HepG2 (cell line): ENCODE measurements at regions of chr20 and their contacts with region 1.

Region 1: DNA sequence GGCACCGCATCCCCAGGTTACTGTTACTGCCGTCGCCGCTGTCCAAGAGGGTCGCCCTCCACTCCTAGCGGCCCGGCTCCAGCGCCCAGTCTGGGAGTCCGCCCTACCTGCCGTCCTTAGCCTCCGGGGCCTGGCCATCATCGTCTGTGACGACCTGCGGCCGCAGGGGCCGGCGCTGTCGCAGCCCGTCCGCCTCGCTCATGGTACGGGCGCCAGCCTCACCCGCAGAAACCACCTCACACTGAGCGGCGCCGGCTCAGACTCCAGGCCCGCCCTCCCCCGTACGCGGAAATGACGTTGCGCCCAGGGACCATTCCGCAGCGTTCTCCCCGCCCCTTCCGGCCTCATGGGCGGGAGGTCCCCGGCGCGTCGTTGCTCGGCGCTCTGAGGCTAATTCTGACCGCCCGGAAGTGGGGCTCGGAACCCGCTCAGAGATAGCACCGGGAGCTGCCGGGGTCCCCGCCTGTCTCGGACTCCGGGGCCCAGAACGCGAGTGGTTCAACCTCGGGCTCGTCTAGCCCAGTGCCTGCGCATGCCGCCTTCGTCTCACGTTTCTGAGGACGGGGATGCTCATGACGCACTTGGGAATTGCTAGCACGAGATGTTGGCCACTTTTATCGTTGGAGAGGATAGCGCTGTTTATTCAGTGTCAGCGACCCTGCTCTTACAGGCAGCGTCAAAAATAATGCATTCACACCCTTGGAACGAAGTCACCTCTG is at the start of gene APMAP:
- DNase-seq: peak; percentile 94
- ATAC-seq: peak; percentile 94
- H3K4me3 ChIP-seq: peak within 1 kb of the TSS; percentile 75 to 88 (median 85)
- H3K27ac ChIP-seq: peak within 1 kb of the TSS; percentile 67
- H3K4me1 ChIP-seq: peaks cover 68% of the 10 kb centered on the region
- H3K27me3 ChIP-seq: peaks cover 1 to 7% of the 10 kb centered on the region in 2 experiments; a peak in 1 of 5 replicates
- CTCF ChIP-seq: peak; percentile 24
- EP300 ChIP-seq: peak; percentile 23 to 48; a peak in 1 of 4 replicates
- POLR2A ChIP-seq: peak; percentile 93 to 97
- RAD21 ChIP-seq: peak; percentile 27; the same call in 1 of the 2 replicates
- total RNA-seq, gene APMAP: 96.9 and 214 TPM in 2 replicates

Region 2: DNA sequence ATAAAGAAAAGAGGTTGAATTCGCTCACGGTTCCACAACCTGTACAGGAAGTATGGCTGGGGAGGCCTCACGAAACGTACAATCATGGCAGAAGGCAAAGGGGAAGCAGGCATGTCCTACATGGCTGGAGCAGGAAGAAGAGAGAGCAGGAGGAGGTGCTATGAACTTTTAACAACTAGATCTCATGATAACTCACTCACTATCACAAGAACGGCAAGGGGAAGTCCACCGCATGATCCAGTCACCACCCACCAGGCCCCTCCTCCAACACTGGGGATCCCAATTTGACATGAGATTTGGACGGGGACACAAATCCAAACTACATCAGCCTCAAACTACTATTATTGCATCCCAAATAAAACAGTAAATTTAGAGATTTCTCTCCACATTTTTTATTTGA is 97.2 kb before region 1 on chr20:
- CTCF ChIA-PET with region 1: no interaction called
- POLR2A ChIA-PET with region 1: no interaction called
- in situ Hi-C with region 1: no loop called
- intact Hi-C with region 1: no loop called
- DNase-seq: no peak
- ATAC-seq: no peak
- H3K4me3 ChIP-seq: no peak overlapping the region
- H3K27ac ChIP-seq: no peak overlapping the region
- H3K4me1 ChIP-seq: no peaks in the 10 kb centered on the region
- H3K27me3 ChIP-seq: peaks cover 3 to 29% of the 10 kb centered on the region in 2 experiments; a peak in 2 of 5 replicates
- CTCF ChIP-seq: no peak
- EP300 ChIP-seq: no peak
- POLR2A ChIP-seq: no peak
- RAD21 ChIP-seq: no peak

Region 3: DNA sequence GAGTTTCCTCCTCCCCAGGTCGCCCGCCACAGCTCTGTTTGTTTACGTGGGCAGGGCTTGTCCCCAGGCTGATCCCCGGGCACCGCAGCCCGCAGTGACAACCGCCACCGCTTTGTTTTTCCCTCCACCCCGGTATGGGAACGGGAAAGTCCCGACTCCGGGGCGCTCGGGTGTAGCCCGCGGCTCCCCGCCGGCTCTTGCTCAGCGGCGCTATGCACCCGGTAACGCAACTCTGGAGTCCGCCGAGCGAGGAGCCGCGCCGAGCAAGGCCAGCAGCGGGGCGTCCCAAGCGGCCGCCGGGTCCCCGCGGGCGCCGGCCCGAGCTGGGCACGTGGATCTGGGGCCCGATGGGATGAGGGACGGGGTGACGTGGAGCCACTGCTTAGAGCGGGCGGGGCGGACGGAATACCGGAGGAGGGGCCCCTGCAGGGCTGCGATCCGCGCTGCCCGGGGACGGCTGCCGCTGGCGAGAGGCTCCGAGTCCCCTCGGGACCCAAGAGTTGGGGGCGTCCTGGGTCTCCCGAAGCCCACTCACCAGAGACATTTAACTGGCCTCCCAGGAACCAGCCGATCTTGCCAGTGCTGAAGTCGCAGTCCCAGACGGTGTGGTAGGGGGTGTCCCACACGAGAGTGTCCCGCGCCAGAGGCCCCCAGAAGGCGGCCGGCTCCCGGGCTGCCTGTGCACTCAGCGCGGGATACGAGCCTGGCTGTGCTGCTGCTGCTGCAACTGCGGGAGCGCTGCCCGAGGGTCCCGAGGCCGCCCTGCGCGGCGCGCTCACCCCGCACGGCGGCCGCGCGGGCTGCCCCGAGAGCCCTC is 64.8 kb after region 1 on chr20:
- CTCF ChIA-PET with region 1: interaction called, 138 read pairs
- POLR2A ChIA-PET with region 1: interaction called, 4 read pairs
- in situ Hi-C with region 1: loop called (anchors 5 kb)
- intact Hi-C with region 1: no loop called
- DNase-seq: no peak
- ATAC-seq: peak; percentile 66
- H3K4me3 ChIP-seq: peak overlapping the region; percentile 64 to 82 (median 67)
- H3K27ac ChIP-seq: peak overlapping the region; percentile 6
- H3K4me1 ChIP-seq: peaks cover 92% of the 10 kb centered on the region
- H3K27me3 ChIP-seq: peaks cover 0 to 29% of the 10 kb centered on the region in 2 experiments; a peak in 4 of 5 replicates
- CTCF ChIP-seq: no peak
- EP300 ChIP-seq: no peak; a peak in 1 of 4 replicates
- POLR2A ChIP-seq: peak in 1 of 2 experiments; percentile 62; a peak in 2 of 4 replicates
- RAD21 ChIP-seq: peak; percentile 54

Region 4: DNA sequence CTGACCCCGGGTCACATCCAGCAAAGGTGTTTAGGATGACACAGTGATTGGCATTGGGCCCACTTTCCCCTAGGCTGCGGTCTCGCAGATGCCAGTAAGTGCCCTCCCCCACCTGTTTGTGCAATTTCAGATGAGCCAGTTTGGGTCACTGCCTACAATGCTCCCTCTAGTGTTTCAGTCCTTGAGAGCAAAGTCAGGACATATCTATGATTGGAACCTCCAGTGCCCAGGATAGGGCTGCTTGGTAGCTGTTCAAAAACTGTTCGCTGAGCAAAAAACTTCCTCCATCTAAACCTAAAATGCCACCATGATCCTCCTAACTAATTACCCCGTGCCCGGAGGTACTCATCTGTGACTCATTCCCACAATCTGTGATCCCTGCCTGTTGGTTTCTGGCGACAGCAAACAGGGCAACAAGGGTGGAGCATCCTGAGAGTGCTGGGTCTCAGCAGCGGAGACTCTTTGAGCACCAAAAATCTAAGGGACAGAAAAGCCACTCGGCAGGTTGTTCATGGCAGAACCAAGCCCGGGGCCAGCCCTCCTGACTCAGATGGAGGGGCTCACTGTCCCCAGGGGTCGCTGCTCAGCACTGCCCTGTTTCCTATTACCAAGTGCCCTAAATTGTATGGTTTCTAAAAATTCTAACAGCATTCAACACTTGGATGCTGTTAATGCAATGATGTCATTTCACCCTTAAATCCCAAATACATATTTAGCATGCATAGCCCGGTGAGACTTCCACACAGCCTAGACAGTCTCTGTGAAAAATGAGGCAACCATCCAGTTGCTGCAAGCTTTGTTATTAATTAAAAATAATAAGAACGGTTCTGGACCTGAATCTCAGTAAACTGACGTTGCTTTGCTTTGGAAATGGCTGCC is 84.3 kb after region 1 on chr20:
- CTCF ChIA-PET with region 1: interaction called, 35 read pairs
- POLR2A ChIA-PET with region 1: interaction called, 3 read pairs
- in situ Hi-C with region 1: no loop called
- intact Hi-C with region 1: no loop called
- DNase-seq: peak; percentile 82
- ATAC-seq: peak; percentile 79
- H3K4me3 ChIP-seq: peak overlapping the region; percentile 22 to 65 (median 30); a peak in 5 of 6 replicates
- H3K27ac ChIP-seq: no peak overlapping the region
- H3K4me1 ChIP-seq: peaks cover 25% of the 10 kb centered on the region
- H3K27me3 ChIP-seq: peaks cover 10 to 70% of the 10 kb centered on the region in 2 experiments; a peak in 4 of 5 replicates
- CTCF ChIP-seq: peak; percentile 75
- EP300 ChIP-seq: 0 out of 4 replicates have a peak, but pooled peaks of 1 of the 2 experiments have one; percentile 26
- POLR2A ChIP-seq: no peak
- RAD21 ChIP-seq: peak; percentile 64

Region 5: GRCh38 chr20:25195014-25195961 is 202.6 kb after region 1 on chr20 and contains the start of gene ENTPD6:
- CTCF ChIA-PET with region 1: no interaction called
- POLR2A ChIA-PET with region 1: interaction called, 3 read pairs
- in situ Hi-C with region 1: loop called (anchors 5 kb)
- intact Hi-C with region 1: no loop called
- DNase-seq: peak; percentile 90
- ATAC-seq: peak; percentile 81
- H3K4me3 ChIP-seq: peak within 1 kb of the TSS; percentile 82 to 97 (median 93)
- H3K27ac ChIP-seq: peak within 1 kb of the TSS; percentile 67
- H3K4me1 ChIP-seq: peaks cover 48% of the 10 kb centered on the region
- H3K27me3 ChIP-seq: peaks cover 2 to 8% of the 10 kb centered on the region in 2 experiments; a peak in 1 of 5 replicates
- CTCF ChIP-seq: peak; percentile 71
- EP300 ChIP-seq: no peak
- POLR2A ChIP-seq: peak; percentile 89 to 97
- RAD21 ChIP-seq: peak; percentile 47
- total RNA-seq, gene ENTPD6: 98.4 and 164 TPM in 2 replicates

Region 6: DNA sequence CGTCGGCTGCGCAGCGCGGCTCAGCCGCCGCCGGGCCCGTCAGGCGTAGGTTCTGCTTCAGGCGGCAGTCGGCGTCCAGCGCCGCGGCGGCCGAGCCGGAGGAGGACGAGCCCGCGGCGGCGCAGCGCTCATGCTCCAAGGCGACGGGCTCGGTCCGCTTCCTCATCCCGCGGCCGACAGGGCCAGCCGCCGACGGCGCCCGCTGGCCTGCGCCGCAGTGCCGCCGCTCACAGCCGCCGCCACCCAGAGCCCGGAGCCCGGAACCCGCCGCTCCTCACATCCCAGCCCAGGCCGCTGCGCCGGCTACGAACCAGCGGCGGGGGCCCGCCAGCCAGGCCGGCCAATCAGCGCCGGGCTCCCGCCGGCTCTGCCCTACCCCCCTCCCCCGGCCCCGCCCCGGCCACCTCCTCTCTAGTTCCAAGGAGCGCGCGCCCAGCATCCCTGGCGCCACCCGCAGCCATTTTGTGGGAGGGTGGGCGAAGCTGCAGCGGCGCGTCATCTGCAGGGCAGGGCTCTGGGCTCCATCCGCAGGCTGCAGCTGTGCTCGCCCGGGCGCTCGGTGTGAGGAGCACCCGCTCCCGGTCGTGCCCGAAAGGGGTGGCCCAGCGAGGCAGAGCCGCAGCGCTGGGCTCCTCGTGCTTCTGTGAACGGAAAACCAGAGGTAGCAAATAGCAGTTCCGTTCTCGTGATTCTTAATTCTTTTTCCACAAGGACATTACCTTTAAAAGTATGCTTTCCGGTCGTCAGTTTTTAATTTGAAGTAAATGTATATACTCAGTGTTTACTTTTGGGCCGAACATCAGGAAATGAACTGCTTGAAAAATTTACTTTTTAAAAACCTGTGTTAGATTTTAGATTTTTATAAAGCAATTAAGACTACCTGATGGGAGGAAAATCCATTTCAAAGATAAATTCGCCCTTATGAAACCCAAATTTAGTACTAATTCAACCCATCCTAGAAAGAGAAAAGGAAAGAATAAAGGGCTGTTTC is 398.2 kb after region 1 on chr20 and contains the start of gene ABHD12:
- CTCF ChIA-PET with region 1: no interaction called
- POLR2A ChIA-PET with region 1: no interaction called
- in situ Hi-C with region 1: no loop called
- intact Hi-C with region 1: loop called (anchors 10 kb)
- DNase-seq: peak; percentile 97
- ATAC-seq: peak; percentile 94
- H3K4me3 ChIP-seq: peak within 1 kb of the TSS; percentile 89 to 95 (median 92)
- H3K27ac ChIP-seq: peak within 1 kb of the TSS; percentile 79
- H3K4me1 ChIP-seq: peaks cover 33% of the 10 kb centered on the region
- H3K27me3 ChIP-seq: no peaks in the 10 kb centered on the region
- CTCF ChIP-seq: peak; percentile 63
- EP300 ChIP-seq: peak in 1 of 2 experiments; percentile 45; a peak in 1 of 4 replicates
- POLR2A ChIP-seq: peak; percentile 93 to 96
- RAD21 ChIP-seq: peak; percentile 62
- total RNA-seq, gene ABHD12: 43.1 and 72.1 TPM in 2 replicates